Sigmoid colon (tissue), 7 donors: ENCODE measurements at regions of chr10 and their contacts with region 1.

Region 1: GRCh38 chr10:84264611-84265141 is 19.8 kb downstream of the RGR start:
- DNase-seq: peak; percentile 75
- H3K4me3 ChIP-seq: no peak overlapping the region
- H3K27ac ChIP-seq: no peak overlapping the region
- H3K4me1 ChIP-seq: no peaks in the 10 kb centered on the region
- H3K27me3 ChIP-seq: peaks cover 0 to 14% (median 0%) of the 10 kb centered on the region in 3 donors
- CTCF ChIP-seq: peak; percentile 55 to 91 (median 82)
- EP300 ChIP-seq: no peak
- POLR2A ChIP-seq: no peak

Region 2: DNA sequence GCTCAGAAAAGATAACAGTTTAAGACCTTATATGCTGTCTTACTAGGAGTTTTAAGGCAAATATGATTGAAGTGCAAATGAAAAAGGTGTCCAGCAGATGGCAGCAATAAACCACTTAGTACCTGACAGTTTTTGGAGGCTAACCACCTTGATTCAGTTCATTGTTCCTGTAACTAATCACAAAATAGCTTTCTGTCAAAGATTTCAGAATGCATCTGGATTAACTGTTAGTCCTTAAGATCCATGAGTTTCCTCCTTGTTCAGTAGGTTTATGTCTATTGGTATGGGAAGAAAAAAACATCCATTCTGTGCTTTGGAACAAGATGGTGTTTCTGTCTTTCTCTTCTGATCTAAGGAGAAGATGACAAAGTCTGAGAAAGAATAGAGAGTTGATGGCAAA is 110.3 kb after region 1 on chr10:
- intact Hi-C with region 1: loop called (anchors 10 kb)
- DNase-seq: no peak
- H3K4me3 ChIP-seq: no peak overlapping the region
- H3K27ac ChIP-seq: no peak overlapping the region
- H3K4me1 ChIP-seq: peaks cover 0 to 3% (median 0%) of the 10 kb centered on the region in 4 donors
- H3K27me3 ChIP-seq: no peaks in the 10 kb centered on the region
- CTCF ChIP-seq: peak; percentile 49 to 73 (median 63)
- EP300 ChIP-seq: no peak
- POLR2A ChIP-seq: no peak